SK-N-SH (cell line): ENCODE measurements at regions of chr1 and their contacts with region 1.

Region 1: DNA sequence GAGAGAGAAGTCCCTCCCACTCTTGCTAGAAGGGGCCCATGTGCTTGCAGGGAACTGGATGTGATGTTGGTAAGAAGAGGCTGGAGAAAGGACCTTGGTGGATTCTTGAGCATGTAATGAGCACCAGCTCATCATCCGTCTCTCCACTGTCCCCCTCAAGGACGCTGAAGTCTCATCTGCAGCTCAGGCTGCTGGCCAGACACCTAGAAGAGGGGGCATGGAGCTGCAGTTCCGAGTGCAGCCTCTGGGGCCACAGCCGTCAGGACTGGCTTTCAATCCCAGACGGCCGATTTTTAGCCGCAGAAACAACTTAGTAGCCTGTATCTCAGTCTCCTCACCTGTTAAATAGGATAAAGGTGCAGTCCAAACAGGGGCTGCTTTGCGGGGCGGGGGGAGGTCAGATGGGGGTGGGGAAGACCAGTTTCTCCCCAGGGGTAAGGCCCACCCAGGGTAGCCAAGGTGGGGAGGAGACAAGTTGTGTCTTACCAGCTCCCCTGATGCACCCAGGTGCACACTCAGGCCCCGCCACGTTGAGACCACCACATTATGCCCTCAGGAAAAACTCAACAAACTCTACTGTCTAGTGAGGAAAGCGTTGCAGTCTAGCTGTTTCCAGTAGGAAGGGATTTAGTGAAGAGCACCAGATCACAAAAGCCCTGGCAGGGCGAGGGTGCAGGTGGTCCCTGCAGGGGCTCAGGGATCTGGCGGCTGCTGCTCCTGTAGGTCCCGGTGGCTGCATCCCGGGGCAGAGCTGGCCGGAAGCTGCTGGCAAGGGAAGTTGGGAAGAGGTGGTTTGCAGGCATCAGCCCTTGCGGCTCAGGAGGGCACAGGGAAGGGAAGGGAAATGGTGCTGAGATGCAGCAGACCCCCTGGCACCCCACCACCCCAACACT is 29.5 kb downstream of the LDLRAP1 start:
- DNase-seq: peak; percentile 85
- H3K4me3 ChIP-seq: no peak overlapping the region
- H3K27ac ChIP-seq: no peak overlapping the region
- H3K4me1 ChIP-seq: peaks cover 9 to 11% of the 10 kb centered on the region in 2 experiments; a peak in 3 of 4 replicates
- H3K27me3 ChIP-seq: no peaks in the 10 kb centered on the region
- CTCF ChIP-seq: peak; percentile 61
- EP300 ChIP-seq: no peak
- RAD21 ChIP-seq: peak; percentile 38

Region 2: DNA sequence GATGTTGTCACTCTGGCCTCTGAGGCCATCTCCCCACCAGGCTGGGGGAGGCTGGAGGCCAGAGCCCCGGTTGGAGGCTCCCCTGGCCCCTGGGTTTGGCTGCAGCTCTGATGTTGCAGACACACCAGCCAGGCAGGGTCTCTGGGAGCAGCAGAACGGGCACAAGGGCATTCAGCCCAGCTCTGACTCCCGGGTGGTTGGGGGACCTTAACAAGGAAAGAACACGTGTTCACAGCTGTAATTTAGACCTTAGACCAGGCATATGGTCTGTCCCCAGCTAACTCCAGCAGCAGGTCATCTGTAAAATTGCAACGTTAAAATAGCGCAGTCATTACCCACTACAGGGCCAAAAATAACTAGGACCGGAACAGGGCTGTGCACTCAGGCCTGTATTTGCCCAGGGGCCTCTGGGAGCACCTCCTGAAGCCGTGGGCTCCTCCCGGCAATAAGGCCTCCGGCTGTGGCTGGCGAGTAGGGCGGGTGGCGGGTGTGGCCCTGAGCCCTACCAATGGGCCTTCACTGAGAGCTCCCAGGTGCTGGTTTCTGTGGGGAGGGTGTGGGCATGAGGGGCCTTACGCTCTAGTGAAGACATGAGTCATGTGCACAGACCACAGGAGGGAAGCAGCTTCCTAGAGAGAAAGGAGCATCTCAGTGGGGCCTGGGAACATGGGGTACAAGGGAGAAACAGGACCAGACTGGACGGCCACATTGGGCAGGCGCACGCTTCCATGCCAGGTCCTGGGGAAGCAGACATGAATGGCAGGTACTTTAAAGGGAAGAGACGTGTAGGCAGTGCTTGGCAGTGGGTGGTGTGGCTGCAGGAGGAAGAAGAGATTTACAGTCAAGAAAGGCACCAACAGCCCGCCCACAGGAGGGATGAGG is 23.4 kb before region 1 on chr1:
- CTCF ChIA-PET with region 1: interaction called, 50 read pairs
- POLR2A ChIA-PET with region 1: no interaction called
- DNase-seq: no peak
- H3K4me3 ChIP-seq: no peak overlapping the region
- H3K27ac ChIP-seq: no peak overlapping the region
- H3K4me1 ChIP-seq: peaks cover 3 to 11% of the 10 kb centered on the region in 2 experiments; a peak in 2 of 4 replicates
- H3K27me3 ChIP-seq: no peaks in the 10 kb centered on the region
- CTCF ChIP-seq: no peak
- EP300 ChIP-seq: no peak
- RAD21 ChIP-seq: no peak

Region 3: DNA sequence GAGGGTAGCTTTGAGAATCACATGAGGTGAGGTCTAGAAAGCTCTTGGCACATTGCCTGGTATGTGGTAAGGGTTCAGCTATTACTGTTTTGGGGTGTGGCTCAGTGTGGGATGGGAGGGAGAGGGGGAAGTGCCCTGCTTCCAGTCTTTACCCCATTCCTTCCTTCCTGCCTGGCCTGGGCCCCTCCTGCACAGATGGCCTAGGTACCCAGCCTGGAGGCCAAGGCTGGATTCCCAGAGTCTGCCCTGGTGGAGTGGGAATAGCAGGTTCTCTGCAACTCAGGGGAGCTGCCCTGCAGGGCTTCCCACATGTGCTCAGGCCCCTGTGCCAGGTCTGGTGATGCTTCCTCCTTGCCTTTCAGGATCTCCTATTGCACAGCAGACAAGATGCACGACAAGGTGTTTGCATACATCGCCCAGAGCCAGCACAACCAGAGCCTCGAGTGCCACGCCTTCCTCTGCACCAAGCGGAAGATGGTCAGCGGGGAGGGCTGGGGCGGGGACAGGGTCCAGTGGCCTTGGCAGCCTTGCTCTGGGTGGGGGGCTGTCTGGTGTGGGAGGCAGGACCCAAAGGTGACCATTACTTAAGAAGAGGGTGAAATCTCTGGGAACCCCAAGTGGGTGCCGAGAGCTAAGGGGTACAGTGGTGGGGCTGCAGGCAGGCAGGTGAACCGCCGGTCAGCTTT is 16.0 kb before region 1 on chr1:
- CTCF ChIA-PET with region 1: interaction called, 50 read pairs
- POLR2A ChIA-PET with region 1: no interaction called
- DNase-seq: no peak
- H3K4me3 ChIP-seq: no peak overlapping the region
- H3K27ac ChIP-seq: no peak overlapping the region
- H3K4me1 ChIP-seq: peaks cover 0 to 15% of the 10 kb centered on the region in 2 experiments; a peak in 1 of 4 replicates
- H3K27me3 ChIP-seq: no peaks in the 10 kb centered on the region
- CTCF ChIP-seq: no peak
- EP300 ChIP-seq: no peak
- RAD21 ChIP-seq: no peak